Testis (tissue), 5 donors: ENCODE measurements at regions of chr1 and their contacts with region 1.

Region 1: DNA sequence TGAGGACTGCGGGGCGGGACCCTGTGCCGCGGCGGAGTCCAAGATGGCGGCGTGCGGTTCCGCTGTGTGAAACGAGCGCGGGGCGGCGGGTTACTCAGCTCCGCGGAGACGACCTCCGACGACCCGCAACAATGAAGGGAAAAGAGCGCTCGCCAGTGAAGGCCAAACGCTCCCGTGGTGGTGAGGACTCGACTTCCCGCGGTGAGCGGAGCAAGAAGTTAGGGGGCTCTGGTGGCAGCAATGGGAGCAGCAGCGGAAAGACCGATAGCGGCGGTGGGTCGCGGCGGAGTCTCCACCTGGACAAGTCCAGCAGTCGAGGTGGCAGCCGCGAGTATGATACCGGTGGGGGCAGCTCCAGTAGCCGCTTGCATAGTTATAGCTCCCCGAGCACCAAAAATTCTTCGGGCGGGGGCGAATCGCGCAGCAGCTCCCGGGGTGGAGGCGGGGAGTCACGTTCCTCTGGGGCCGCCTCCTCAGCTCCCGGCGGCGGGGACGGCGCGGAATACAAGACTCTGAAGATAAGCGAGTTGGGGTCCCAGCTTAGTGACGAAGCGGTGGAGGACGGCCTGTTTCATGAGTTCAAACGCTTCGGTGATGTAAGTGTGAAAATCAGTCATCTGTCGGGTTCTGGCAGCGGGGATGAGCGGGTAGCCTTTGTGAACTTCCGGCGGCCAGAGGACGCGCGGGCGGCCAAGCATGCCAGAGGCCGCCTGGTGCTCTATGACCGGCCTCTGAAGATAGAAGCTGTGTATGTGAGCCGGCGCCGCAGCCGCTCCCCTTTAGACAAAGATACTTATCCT is 430 bp downstream of the RBM15 start:
- DNase-seq: peak; percentile 72
- H3K4me3 ChIP-seq: peak overlapping the region; percentile 82 to 96
- H3K27ac ChIP-seq: peak overlapping the region; percentile 90 to 98
- H3K4me1 ChIP-seq: peaks cover 34% of the 10 kb centered on the region
- H3K27me3 ChIP-seq: no peaks in the 10 kb centered on the region
- CTCF ChIP-seq: peak in 1 of 3 experiments; percentile 31
- POLR2A ChIP-seq: peak; percentile 65

Region 2: DNA sequence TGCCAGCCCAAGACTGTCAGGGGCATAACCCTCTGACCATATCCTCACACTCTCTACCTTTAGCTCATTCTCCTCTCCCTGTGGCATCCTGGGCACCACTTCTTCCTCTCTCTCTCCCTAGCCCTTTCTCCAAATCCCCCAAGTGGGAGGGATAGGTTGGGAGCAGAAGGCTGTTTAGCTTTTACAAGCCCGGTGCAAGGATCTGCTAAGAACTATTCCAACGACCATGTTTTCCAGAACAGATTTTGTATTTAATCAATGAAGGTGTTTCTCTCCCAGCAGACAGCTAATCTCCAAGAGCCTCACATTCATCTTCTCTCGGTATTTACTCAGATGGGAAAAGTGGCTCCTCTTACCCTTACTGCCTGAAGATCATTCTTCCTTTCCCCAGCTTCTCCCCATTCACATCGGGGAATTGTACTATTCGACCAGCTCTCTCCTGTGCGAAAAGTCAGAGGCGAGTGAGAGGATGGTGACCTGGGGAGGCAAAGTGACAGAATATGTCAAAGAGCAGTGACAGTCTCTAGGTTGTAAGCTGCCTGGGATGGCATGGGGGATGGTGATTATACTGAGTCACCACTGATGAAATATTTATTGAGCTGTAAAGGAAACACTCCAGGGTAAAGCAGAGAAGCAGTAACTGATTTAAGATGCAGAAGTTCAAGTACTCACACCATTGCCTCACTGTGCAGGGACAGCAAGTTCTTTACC is 47.4 kb before region 1 on chr1:
- intact Hi-C with region 1: no loop called
- DNase-seq: no peak
- H3K4me3 ChIP-seq: no peak overlapping the region
- H3K27ac ChIP-seq: no peak overlapping the region
- H3K4me1 ChIP-seq: no peaks in the 10 kb centered on the region
- H3K27me3 ChIP-seq: no peaks in the 10 kb centered on the region
- CTCF ChIP-seq: no peak
- POLR2A ChIP-seq: no peak

Region 3: GRCh38 chr1:110407260-110408210 is 67.9 kb after region 1 on chr1 and contains the start of gene LAMTOR5:
- intact Hi-C with region 1: loop called (anchors 10 kb)
- DNase-seq: peak; percentile 96
- H3K4me3 ChIP-seq: peak within 1 kb of the TSS; percentile 90 to 95
- H3K27ac ChIP-seq: peak within 1 kb of the TSS; percentile 91 to 93
- H3K4me1 ChIP-seq: peaks cover 15% of the 10 kb centered on the region
- H3K27me3 ChIP-seq: no peaks in the 10 kb centered on the region
- CTCF ChIP-seq: peak in 2 of 3 experiments; percentile 3 to 50
- POLR2A ChIP-seq: peak; percentile 39
- total RNA-seq, gene LAMTOR5: 75.4 to 88.8 TPM